BJ (cell line): ENCODE measurements at regions of chr6 and their contacts with region 1.

Region 1: DNA sequence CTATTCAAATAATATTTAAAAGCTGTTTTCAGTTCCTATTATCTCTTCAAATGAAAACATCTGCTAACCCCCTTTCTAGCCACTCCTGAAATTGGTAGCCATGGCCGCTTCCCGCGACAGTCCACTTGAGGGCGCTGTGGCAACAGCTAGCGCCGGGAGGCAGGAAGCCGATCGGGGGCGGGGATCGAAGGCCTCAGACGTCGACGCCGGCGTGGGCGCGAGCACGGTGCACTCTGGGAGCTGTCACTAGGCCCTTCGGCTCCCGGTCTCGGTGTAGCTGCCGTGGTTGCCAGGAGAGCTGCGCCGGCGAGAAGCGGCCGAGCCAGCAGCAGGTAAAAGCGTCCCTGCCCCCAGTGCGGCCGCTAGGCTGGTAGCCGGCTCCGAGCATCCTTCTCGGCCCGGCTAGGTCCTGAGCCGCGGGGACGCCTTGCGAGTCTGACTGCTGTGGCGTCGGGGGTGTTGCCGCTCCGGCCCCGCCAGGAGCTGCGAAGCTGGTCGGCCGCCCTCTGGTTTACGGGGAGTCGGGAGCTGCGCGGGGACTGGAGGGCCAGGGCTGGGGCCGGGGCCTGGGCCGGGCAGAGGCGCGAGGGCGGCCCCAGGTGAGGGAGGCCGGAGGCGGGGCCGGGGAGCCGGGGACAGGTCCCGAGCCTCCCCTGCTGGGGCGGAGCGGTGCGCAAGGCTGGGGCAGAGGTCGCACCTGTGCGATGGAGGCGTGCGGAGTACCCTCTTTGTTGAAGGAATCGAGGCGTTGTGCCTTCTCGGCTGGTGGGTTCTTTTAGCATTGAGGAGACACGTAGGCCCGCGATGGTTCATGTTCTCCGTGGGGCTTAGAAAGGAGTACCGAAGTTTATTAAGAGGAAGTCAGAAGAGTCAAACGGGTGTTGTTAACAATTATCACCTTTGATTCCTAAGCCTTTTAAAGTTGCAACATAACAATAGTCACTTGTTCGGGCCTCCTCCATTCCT is at the start of gene DOP1A:
- DNase-seq: peak; percentile 47
- H3K4me3 ChIP-seq: peak within 1 kb of the TSS; percentile 97
- H3K27me3 ChIP-seq: no peaks in the 10 kb centered on the region
- CTCF ChIP-seq: peak; percentile 99
- polyA plus RNA-seq, gene DOP1A: 4.7 and 11.5 TPM in 2 replicates

Region 2: DNA sequence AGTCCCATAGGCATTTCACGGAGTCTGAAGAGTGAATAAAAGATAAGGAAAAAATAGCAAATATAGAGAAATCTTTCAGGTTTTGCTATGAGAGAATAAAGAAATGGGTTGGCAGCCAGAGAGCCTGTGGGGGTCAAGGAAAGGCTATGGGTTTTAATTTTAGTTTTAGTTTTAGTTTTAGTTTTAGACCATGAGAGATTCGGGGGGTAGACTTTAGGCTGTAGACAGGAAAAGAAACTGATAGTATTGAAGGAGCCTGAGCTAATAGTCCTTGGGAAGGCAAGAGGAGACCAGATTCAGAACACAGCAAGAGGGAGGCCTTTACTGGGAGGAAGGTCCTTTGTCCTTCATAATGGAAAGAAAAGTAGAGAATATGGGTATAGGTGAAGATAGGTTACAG is 19.0 kb after region 1 on chr6:
- CTCF ChIA-PET with region 1: interaction called, 37 read pairs
- POLR2A ChIA-PET with region 1: no interaction called
- DNase-seq: no peak
- H3K4me3 ChIP-seq: no peak overlapping the region
- H3K27me3 ChIP-seq: no peaks in the 10 kb centered on the region
- CTCF ChIP-seq: no peak

Region 3: GRCh38 chr6:83132121-83132520 is 64.4 kb after region 1 on chr6:
- CTCF ChIA-PET with region 1: interaction called, 21 read pairs
- POLR2A ChIA-PET with region 1: no interaction called
- DNase-seq: no peak
- H3K4me3 ChIP-seq: no peak overlapping the region
- H3K27me3 ChIP-seq: no peaks in the 10 kb centered on the region
- CTCF ChIP-seq: no peak

Region 4: GRCh38 chr6:83183082-83183828 is 115.5 kb after region 1 on chr6:
- CTCF ChIA-PET with region 1: interaction called, 24 read pairs
- POLR2A ChIA-PET with region 1: no interaction called
- DNase-seq: peak; percentile 87
- H3K4me3 ChIP-seq: no peak overlapping the region
- H3K27me3 ChIP-seq: no peaks in the 10 kb centered on the region
- CTCF ChIP-seq: no peak

Region 5: DNA sequence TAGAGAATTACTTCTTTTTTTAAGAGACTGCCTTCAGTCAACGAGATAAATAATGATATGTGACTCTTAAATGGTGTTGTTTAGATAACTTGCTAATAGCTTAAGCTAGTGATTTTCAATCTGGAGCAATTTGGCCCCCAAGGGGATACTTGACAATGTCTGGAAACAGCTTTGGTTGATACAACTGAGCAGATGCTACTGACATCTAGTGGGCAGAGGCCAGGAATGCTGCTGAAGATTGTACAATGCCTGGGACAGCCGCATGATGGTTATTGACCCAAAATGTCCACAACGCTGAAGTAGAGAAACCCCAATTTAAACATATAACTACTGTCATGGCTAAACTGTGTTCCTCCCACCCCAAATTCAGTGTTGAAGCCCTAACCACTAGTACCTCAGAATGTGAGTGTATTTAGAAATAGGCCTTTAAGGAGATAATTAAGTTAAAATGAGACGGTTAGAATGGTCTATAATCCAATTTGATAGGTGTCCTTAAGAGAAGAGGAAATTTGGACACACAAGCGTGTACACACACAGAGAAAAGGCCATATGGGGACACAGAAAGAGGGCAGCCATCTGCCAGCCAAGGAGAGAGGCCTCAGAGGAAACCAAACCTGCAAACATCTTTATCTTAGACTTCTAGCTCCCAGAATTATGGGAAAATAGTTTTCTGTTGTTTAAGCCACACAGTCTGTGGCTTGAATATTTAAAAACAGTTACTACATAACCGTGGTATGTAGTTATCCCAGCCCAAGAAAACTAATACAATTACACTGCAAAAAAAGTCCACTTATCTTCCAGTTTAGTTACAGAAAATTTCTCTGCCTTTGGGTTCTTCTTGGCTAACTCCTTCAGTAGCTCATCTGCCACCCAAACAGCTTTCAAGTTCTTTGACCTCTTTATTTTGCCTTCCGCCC is 147.7 kb after region 1 on chr6:
- CTCF ChIA-PET with region 1: interaction called, 281 read pairs
- POLR2A ChIA-PET with region 1: no interaction called
- DNase-seq: no peak
- H3K4me3 ChIP-seq: no peak overlapping the region
- H3K27me3 ChIP-seq: no peaks in the 10 kb centered on the region
- CTCF ChIP-seq: peak; percentile 90

Region 6: GRCh38 chr6:83514866-83515466 is 447.2 kb after region 1 on chr6:
- CTCF ChIA-PET with region 1: interaction called, 116 read pairs
- POLR2A ChIA-PET with region 1: no interaction called
- DNase-seq: no peak
- H3K4me3 ChIP-seq: no peak overlapping the region
- H3K27me3 ChIP-seq: no peaks in the 10 kb centered on the region
- CTCF ChIP-seq: peak; percentile 79